ENCODE measurements at regions of chr14 and their contacts with region 1.

Region 1: GRCh38 chr14:23259426-23259825 is 21.7 kb downstream of the RNF212B start:
- DNase-seq: no peak
- H3K4me3 Mint-ChIP-seq: no peak overlapping the region
- H3K27ac Mint-ChIP-seq: no peak overlapping the region
- H3K4me1 Mint-ChIP-seq: no peaks in the 10 kb centered on the region
- H3K27me3 Mint-ChIP-seq: peaks cover 47% of the 10 kb centered on the region

Region 2: GRCh38 chr14:23034483-23035302 is 224.7 kb before region 1 on chr14 and contains the start of gene PSMB5:
- intact Hi-C with region 1: no loop called
- DNase-seq: peak; percentile 96
- H3K4me3 Mint-ChIP-seq: peak within 1 kb of the TSS; percentile 81
- H3K27ac Mint-ChIP-seq: peak within 1 kb of the TSS; percentile 88
- H3K4me1 Mint-ChIP-seq: peaks cover 24% of the 10 kb centered on the region
- H3K27me3 Mint-ChIP-seq: no peaks in the 10 kb centered on the region
- total RNA-seq, gene PSMB5: 150 TPM in 2 replicates

Region 3: DNA sequence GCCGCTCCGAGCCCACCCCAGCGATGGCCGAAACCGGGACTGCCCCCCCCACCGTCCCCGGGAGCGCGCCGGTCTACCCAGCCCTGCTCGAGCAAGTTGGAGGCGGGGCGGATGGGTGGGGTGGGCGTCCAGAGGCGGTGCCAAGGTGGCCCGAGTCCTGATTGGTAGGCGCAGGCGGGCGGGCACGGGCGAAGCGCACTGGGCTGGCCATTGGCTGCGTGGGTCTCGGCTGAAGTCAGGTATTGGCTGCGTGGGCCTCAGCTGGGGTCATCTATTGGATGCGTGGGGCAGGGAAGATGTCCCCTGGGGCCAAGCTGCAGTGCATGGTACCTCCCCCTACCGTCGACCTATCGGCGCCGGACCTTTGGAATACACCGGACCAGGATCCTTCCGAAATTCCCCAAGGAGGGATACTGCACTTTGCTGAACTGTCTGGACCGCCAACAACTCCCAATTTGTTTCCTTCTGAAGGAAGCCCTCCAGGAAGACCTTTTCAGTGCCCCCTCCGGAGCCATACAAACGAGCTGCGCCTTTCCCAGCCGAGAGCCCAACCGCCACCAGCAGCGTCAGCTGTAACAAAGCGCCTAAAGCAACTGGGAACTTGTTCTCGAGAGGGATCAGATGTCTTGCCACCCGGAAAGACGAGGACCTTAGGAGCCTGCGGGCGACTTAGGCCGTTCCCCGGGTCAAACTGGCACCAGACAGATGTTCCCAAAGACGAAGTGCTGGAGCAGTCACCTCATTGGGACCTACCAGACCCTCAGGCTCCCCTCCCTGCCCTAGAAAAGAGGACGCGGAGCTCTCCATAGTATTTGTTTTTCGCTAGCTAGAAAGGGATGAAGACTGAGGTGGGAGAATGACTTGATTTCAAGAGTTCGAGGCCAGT is 26.8 kb after region 1 on chr14 and contains the start of gene HOMEZ:
- intact Hi-C with region 1: loop called (anchors 2 kb)
- DNase-seq: peak; percentile 99
- H3K4me3 Mint-ChIP-seq: peak within 1 kb of the TSS; percentile 99
- H3K27ac Mint-ChIP-seq: peak within 1 kb of the TSS; percentile 94
- H3K4me1 Mint-ChIP-seq: peaks cover 20% of the 10 kb centered on the region
- H3K27me3 Mint-ChIP-seq: no peaks in the 10 kb centered on the region
- total RNA-seq, gene HOMEZ: 12.9 and 13.5 TPM in 2 replicates

Region 4: DNA sequence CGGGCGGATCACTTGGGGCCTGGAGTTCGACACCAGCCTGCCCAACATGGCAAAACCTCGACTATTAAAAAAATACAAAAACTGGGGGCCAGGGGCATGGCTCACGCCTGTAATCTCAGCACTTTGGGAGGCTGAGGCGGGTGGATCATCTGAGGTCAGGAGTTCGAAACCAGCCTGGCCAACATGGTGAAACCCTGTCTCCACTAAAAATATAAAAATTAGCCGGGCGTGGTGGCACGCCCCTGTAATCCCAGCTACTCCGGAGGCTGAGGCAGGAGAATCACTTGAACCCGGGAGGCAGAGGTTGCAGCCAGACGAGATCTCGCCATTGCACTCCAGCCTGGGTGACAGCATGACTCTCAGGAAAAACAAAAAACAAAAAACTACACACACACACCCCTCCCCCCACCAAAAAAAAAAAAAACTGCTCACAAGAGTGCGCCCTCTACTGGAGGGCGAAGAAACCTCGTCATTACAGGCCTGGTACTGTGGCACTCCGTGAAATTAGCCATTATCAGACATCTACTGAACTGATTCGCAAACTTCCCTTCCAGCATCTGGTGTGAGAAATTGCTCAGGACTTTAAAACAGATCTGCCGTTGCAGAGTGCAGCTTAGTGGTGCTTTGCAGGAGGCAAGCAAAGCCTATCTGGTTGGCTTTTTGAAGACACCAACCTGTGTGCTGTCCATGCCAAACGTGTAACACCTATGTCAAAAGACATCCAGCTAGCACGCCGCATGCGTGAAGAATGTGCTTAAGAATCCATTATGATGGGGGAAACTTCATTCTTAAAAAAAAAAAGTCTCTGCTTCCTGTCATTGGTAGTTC is 35.5 kb after region 1 on chr14:
- intact Hi-C with region 1: loop called (anchors 2 kb)
- DNase-seq: peak; percentile 90
- H3K4me3 Mint-ChIP-seq: peak overlapping the region; percentile 25
- H3K27ac Mint-ChIP-seq: peak overlapping the region; percentile 78
- H3K4me1 Mint-ChIP-seq: peaks cover 17% of the 10 kb centered on the region
- H3K27me3 Mint-ChIP-seq: no peaks in the 10 kb centered on the region

Region 5: DNA sequence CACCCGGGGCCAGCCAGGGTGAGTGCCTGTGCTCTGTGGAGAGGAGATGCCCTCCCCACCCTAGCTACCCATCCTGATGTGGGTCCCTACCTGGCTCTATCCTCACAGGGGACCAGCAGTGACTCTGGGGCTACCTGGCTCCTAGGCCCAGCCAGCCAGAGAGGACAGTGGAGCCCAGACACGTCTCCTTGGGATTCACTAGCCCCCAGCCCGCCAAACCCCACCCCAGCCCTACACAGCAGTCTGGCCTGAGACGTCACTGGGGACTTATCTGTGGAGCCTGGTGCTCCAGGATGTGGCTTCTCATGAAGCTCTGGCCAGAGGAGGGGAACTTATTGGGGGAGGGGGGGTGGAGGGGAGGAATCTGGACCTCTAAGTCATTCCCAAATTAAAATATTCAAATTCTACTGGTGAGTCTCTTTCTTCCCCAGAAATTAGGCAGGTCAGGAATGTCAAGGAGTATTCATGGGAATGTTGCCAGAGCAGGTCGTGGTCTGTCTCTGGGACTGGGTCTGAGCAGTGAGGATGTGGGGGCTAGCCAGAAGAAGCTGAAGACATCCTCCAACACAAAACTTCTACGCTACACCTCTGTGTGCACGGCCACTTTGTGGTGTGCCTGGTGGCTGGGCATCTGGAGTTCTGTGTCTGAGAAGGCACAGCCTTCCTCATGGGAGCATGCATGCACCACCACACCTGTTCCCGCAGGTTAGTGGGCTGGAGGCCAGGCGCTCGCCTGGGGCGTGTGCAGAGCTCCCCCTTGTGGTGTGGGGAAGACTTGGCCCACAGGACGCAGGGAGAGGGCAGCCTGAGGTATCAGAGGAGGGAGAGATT is 120.2 kb after region 1 on chr14:
- intact Hi-C with region 1: loop called (anchors 2 kb)
- DNase-seq: peak; percentile 90
- H3K4me3 Mint-ChIP-seq: no peak overlapping the region
- H3K27ac Mint-ChIP-seq: no peak overlapping the region
- H3K4me1 Mint-ChIP-seq: no peaks in the 10 kb centered on the region
- H3K27me3 Mint-ChIP-seq: peaks cover 10% of the 10 kb centered on the region